Activated CD4-positive, alpha-beta T cell treated with anti-CD3 and anti-CD28 coated beads for 36 hours (primary cell): ENCODE measurements at regions of chr12 and their contacts with region 1.

Region 1: DNA sequence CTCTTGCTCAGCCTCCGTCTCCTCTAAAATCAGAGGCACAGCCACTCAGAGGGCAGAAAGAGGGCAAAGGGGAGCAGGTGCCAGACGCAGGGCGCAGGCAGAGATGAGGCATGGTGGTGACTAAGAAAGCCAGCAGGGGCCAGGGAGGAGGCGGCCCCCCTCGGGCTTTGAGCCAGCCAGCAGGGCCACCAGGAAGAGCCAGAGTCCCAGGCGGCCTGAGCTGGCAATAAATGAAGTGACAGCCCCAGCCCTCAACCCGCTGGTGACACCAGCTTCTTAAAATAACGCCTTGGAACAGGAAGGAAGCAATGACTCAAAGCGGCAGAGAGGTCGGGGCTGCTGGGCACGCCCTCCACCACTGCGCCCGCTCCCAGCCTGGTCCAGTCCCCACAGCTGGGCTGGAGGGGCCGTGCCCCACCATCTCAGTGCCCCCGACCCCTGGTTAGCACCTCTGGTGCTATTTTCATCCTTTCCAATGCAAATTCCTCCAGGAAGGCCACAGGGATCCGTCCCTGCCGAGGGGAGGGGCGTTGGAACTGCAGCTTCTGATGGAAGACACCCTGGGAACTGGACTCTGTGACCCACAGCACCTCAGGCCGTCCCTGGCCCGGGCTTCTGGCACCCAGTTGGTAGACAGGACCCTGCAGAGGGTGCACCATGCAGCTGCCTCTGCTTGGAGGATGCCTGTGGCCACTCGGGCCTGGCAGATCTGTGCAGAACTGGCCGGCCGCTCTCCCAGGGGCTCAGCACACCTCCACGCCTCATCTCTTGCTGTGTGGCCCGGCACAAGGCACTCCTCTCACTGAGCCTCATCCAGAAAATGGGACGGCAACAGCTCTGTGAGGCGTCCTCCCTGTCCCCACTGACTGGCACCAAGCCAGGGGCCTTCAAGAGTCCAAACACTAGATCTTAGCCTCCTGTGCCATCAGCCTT is 113.7 kb downstream of the NCOR2 start:
- DNase-seq: peak; percentile 93
- ATAC-seq: peak; percentile 90
- H3K4me3 Mint-ChIP-seq: peak overlapping the region; percentile 17
- H3K27ac Mint-ChIP-seq: peak overlapping the region; percentile 37
- H3K4me1 Mint-ChIP-seq: peaks cover 64% of the 10 kb centered on the region
- H3K27me3 Mint-ChIP-seq: no peaks in the 10 kb centered on the region

Region 2: DNA sequence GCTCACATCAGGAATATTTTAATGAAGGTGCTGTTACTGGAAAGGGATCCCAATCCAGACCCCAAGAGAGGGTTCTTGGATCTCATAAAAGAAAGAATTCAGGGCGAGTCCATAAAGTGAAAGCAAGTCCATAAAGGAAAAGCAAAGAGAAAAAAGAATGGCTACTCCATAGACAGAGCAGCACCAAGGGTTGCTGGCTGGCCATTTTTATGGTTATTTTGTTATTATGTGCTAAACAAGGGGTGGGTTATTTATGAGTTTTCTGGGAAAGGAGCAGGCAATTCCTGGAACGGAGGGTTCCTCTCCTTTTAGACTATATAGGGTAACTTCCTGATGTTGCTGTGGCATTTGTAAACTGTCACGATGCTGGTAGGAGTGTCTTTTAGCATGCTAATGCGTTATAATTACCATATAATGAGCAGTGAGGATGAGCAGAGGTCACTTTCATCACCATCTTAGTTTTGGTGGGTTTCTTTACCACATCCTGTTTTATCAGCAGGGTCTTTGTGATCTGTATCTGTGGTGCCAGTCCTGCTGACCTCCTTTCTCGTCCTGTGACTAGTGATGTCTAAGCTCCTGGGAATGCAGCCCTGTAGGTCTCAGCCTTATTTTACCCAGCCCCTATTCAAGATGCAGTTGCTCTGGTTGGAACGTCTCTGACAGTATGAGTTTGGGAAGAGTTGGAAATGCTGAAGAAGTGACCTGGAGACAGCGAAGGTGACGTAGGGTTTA is 380.2 kb before region 1 on chr12:
- CTCF ChIA-PET with region 1: no interaction called
- POLR2A ChIA-PET with region 1: no interaction called
- intact Hi-C with region 1: no loop called
- DNase-seq: no peak
- ATAC-seq: no peak
- H3K4me3 Mint-ChIP-seq: no peak overlapping the region
- H3K27ac Mint-ChIP-seq: no peak overlapping the region
- H3K4me1 Mint-ChIP-seq: peaks cover 3% of the 10 kb centered on the region
- H3K27me3 Mint-ChIP-seq: peaks cover 3% of the 10 kb centered on the region

Region 3: DNA sequence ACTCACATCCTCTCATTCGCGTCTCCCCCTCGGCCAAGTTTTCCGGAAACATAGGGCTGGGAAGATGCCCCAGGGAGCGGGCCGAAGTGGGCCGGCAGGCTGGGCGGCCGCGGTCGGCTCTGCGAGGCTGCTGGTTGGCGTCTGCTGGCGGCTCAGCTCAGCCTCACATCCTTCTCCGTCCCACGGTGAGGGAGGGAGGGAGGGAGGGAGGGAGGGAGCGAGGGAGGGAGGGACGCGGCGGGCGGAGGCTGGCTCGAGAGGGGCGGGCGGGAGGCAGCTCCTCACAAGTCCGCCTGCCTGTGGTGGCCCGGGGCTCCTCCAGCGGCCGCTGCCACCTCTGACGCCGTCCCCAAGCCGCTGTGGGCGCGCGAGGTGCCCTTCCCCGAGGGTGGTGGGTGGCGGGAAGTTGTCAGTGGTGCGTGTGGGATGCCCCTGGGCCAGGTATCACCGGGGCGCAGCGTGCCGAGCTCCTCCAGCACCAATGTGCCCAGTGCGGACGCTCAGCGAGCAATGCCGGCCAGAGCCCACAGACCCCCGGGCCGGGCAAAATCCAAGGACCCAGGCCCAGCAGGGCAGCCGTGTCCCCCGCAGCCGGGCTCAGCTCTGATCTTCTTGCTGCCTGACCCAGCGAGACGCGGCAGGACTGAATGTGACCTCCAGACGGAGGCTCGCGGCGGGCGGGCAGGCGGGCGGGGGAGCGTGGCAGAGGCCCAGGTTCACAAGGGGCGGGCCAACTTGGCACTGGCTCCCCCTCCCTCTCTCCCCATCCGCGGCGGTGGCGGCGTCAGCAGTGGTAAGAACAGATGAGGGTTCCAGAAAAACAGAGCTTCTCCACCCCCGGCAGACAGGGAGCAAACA is 64.8 kb before region 1 on chr12:
- CTCF ChIA-PET with region 1: interaction called, 4 read pairs
- POLR2A ChIA-PET with region 1: no interaction called
- intact Hi-C with region 1: loop called in 1 of 2 experiments (anchors 1 kb)
- DNase-seq: peak; percentile 86
- ATAC-seq: peak; percentile 79
- H3K4me3 Mint-ChIP-seq: peak overlapping the region; percentile 44
- H3K27ac Mint-ChIP-seq: no peak overlapping the region
- H3K4me1 Mint-ChIP-seq: peaks cover 43% of the 10 kb centered on the region
- H3K27me3 Mint-ChIP-seq: no peaks in the 10 kb centered on the region

Region 4: GRCh38 chr12:124480469-124481256 is 27.0 kb after region 1 on chr12:
- CTCF ChIA-PET with region 1: no interaction called
- POLR2A ChIA-PET with region 1: no interaction called
- intact Hi-C with region 1: loop called in 1 of 2 experiments (anchors 1 kb)
- DNase-seq: peak; percentile 80
- ATAC-seq: peak; percentile 85
- H3K4me3 Mint-ChIP-seq: no peak overlapping the region
- H3K27ac Mint-ChIP-seq: no peak overlapping the region
- H3K4me1 Mint-ChIP-seq: peaks cover 41% of the 10 kb centered on the region
- H3K27me3 Mint-ChIP-seq: no peaks in the 10 kb centered on the region

Region 5: DNA sequence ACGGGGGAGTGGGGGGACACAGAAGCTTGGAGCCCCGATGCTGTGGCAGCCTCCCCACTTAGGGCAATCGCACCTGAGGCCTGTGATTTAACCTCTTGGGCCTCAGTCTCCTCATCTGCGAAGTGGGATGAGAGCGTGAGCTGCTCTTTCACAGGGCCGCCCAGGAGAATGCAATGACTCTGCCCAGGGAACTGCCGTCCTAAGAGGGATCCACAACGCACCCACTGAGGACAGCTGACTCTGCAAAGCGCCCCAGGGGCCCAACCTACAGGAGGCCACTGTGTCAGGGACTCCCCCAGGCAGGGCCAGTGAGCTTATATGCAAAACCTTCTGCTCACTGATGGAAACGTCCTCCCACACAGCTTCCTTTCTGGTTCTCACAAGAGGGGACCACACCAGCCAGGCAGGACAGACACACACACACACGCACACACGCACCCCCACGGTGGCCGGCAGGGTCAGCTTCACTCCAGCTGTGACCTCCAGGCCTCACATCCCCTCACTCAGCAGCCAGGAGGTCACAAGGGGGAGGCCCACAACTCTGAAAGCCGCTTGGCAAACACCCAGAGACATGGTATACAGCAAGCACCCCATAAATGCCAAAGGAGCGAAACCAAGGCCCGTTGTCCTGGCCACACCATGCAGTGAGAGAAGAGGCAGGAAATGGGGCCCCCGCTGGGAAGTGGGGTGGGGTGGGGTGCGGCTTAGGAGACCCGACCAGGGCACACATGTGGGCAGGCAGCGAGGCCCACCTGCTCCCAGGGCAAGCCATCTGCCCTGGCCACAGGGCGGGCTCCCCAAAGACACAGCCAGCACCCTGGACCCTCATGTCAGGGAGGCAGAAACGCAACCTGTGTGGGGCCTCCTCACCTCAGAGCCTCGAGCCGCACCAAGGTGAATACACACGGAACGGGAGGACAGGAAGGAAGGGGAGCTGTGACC is 40.4 kb after region 1 on chr12:
- CTCF ChIA-PET with region 1: no interaction called
- POLR2A ChIA-PET with region 1: interaction called, 5 read pairs
- intact Hi-C with region 1: loop called in 1 of 2 experiments (anchors 1 kb)
- DNase-seq: peak; percentile 84
- ATAC-seq: peak; percentile 96
- H3K4me3 Mint-ChIP-seq: peak overlapping the region; percentile 25
- H3K27ac Mint-ChIP-seq: peak overlapping the region; percentile 91
- H3K4me1 Mint-ChIP-seq: peaks cover 48% of the 10 kb centered on the region
- H3K27me3 Mint-ChIP-seq: no peaks in the 10 kb centered on the region

Region 6: GRCh38 chr12:124518051-124518932 is 64.6 kb after region 1 on chr12:
- CTCF ChIA-PET with region 1: no interaction called
- POLR2A ChIA-PET with region 1: no interaction called
- intact Hi-C with region 1: no loop called
- DNase-seq: no peak
- ATAC-seq: no peak
- H3K4me3 Mint-ChIP-seq: no peak overlapping the region
- H3K27ac Mint-ChIP-seq: no peak overlapping the region
- H3K4me1 Mint-ChIP-seq: peaks cover 34% of the 10 kb centered on the region
- H3K27me3 Mint-ChIP-seq: no peaks in the 10 kb centered on the region

Region 7: DNA sequence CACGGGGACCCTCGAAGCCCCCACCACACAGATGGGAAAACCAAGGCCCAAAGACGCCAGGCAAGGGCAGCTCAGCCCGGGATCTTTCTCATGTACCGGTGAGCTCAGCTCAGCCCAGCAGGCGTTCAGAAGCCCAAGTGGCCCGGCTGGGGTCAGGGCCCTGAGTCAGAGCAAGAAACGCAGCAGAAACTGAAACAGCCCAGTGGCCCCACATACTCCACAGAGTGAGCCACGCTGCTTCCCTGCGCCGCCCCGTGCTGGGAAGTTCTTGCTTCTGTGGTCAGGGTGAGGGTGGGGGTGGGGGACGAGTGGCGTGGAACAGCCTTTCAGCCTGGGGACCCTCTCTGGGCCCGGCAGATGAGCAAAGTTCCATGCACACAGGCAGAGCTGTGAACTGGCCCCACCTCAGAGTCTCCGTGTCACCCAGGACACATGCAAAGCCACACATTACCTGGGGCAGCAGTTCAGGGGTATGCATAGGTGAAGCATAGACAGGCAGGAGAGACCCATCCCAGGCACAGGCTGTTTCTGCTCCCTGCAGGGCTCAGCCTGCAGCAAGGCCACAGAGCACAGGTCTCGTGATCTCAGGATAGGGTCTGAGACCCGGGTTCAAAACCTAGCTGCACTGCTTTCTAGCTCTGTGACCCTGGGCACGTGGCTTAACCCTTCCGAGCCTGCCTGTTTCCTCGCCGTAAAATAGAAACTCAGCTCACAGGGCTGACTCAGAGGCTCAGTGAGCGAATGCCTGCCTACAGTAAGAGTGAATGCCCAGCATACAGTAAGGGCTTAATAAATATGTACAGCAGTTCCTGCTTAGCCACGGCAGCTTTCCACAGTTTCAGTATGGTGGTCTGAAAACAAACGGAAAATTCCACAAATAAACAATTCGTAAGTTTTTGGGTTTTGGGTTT is 92.1 kb after region 1 on chr12:
- CTCF ChIA-PET with region 1: no interaction called
- POLR2A ChIA-PET with region 1: no interaction called
- intact Hi-C with region 1: loop called in 1 of 2 experiments (anchors 5 kb)
- DNase-seq: peak; percentile 85
- ATAC-seq: peak; percentile 84
- H3K4me3 Mint-ChIP-seq: peak overlapping the region; percentile 31
- H3K27ac Mint-ChIP-seq: peak overlapping the region; percentile 37
- H3K4me1 Mint-ChIP-seq: peaks cover 70% of the 10 kb centered on the region
- H3K27me3 Mint-ChIP-seq: no peaks in the 10 kb centered on the region

Region 8: DNA sequence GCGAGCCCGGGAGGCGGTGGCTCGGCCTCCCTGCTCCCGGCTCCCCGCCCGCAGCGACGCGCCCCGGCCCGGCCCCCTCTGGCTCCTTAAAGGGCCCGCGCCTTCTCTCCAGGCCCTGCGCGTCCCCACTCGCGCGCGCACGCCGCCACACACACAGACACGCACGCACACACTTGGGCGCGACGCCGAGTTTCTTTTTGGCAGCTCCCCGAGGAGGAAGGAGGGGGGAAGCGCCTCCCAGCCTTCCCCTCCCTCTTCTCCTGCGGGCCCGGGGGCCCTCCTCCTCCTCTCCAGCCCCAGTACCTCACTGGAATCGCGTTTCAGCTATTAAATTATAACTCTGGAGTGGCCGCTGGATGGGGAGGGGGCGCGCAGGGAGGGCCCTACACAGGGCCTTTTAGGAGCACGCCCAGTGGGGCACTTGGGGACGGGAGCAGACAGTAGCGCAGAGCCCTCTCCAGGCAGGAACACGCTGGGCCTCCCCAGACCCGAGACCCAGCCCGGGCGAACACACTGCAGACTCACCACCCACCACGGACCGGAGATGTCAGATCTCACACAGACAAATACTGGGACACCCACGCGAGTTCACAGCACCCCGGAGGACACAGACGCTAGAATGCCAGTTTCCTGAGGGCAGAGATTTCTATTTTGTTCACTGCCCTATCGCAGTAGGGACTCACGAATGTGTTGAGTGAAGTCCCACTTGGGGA is 114.1 kb after region 1 on chr12:
- CTCF ChIA-PET with region 1: no interaction called
- POLR2A ChIA-PET with region 1: no interaction called
- intact Hi-C with region 1: loop called (anchors 1 to 5 kb)
- DNase-seq: peak; percentile 89
- ATAC-seq: peak; percentile 72
- H3K4me3 Mint-ChIP-seq: peak overlapping the region; percentile 75
- H3K27ac Mint-ChIP-seq: peak overlapping the region; percentile 89
- H3K4me1 Mint-ChIP-seq: peaks cover 33% of the 10 kb centered on the region
- H3K27me3 Mint-ChIP-seq: no peaks in the 10 kb centered on the region